ENCODE measurements at regions of chrX and their contacts with region 1.

Region 1: DNA sequence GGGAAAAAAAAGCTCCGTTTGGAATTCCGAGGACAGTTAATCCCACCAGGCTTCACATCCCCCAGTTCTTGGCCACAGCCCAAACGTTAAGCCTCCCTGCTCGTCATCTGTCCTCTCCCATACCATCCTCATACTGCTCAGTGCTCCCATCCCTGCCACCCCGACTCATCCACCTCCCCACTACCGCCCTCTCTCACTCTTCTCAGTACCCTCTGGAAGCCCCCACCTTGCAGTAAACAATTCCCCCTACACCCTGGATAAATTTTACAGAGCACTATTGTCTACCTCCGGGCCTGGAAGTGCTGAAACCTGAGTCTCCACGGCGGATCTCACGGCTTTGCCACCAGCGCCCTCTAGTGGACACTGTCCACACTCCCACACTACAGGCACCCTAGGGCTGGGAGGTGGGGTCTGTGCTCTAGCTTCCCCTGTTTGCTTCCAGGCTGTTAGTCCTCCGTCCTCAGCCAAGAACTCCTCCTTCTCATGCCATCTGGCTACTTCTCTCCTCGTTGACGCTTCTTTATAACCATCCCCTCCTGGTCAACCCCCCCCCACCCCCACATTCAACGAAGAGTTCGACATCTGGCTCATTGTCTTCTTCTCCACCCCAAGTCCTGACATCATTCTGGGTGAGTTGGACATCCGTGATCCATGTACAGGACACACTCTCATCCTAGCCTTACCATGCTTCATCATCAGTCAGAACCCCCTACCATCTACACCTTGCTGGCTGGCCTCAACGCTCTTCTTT is 54.5 kb downstream of the RTL9 start:
- DNase-seq: peak; percentile 74
- H3K4me3 Mint-ChIP-seq: no peak overlapping the region
- H3K27ac Mint-ChIP-seq: peak overlapping the region; percentile 68
- H3K4me1 Mint-ChIP-seq: peaks cover 16% of the 10 kb centered on the region
- H3K27me3 Mint-ChIP-seq: peaks cover 64% of the 10 kb centered on the region
- CTCF ChIP-seq: peak; percentile 86

Region 2: GRCh38 chrX:109911046-109911445 is 502.1 kb before region 1 on chrX:
- CTCF ChIA-PET with region 1: interaction called, 7 read pairs
- POLR2A ChIA-PET with region 1: no interaction called
- intact Hi-C with region 1: loop called (anchors 2 kb)
- DNase-seq: peak; percentile 20
- H3K4me3 Mint-ChIP-seq: no peak overlapping the region
- H3K27ac Mint-ChIP-seq: no peak overlapping the region
- H3K4me1 Mint-ChIP-seq: no peaks in the 10 kb centered on the region
- H3K27me3 Mint-ChIP-seq: peaks cover 50% of the 10 kb centered on the region
- CTCF ChIP-seq: peak; percentile 45

Region 3: DNA sequence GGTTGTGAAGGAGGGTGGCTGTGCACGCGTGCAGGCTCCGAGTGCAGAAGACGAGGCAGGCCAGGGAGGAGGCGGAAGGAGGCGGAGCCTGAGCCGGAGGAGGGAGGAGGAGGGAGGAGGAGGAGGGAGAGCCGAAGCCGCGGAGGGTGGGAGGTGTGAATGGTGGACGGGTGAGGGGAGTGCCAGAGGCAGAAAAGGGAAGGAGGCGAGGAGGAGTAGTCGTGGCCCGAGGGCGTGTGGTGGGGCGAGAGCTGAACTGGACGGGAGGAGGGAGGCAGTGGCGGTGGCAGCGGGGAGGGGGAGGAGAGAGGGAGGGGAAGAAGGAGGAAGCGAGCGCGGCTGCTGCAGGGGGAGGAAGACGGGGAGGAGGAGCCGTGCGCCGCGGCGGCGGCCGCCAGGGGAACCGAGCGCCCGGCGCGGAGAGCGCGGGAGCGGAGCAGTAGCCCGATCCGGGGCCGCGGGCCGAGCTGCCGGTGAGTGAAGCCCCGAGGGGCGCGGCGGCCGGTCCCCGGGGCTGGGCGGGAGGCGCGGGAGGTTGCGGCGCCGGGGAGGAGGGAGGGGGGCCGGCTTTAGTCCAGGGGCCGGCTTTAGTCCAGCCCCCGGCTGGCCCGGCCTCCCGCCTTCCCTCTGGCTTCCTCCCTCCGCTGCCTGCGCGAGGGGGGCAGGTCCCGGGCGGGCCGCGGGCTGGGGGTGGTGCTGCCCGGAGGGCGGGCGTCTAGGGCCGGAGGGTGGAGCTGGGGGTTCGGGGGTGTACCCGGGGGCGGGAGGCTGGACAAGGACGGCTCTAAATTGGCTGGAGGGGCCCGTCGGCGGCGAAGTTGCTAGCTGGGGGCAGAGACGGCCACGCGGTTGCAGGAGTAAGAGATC is 410.6 kb before region 1 on chrX and contains the start of gene TMEM164:
- CTCF ChIA-PET with region 1: interaction called, 3 read pairs
- POLR2A ChIA-PET with region 1: no interaction called
- intact Hi-C with region 1: loop called (anchors 10 kb)
- DNase-seq: peak; percentile 70
- H3K4me3 Mint-ChIP-seq: peak within 1 kb of the TSS; percentile 84
- H3K27ac Mint-ChIP-seq: peak within 1 kb of the TSS; percentile 80
- H3K4me1 Mint-ChIP-seq: peaks cover 27% of the 10 kb centered on the region
- H3K27me3 Mint-ChIP-seq: peaks cover 75% of the 10 kb centered on the region
- CTCF ChIP-seq: no peak
- total RNA-seq, gene TMEM164: 39.2 and 39.4 TPM in 2 replicates

Region 4: DNA sequence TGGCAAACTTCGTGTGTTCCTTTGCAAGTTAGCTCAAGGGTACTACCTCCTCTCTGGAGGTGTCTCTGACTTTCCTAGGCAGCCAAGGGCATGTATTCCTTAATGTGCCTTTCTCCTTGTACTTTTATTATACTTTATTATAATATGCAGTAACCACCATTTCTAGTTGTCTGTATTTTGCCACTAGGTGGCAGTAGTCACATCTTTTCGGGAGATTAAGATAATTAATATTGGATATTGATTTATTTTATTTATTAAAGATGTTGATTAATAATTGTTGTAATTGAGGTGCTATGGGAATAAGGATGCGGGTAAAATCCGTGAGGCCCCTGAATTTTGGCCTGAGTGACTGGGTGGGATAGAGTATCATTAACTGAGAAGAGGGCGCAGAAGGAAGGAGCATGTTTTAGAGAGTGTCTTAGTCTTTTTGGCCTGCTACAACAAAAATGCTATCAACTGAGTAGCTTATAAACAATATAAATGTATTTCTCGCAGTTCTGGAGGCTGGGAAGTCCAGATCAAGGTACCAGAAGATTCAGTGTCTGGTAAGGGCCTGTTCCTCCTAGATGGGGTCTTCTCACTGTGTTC is 256.9 kb before region 1 on chrX:
- CTCF ChIA-PET with region 1: interaction called, 432 read pairs
- POLR2A ChIA-PET with region 1: interaction called, 4 read pairs
- intact Hi-C with region 1: loop called (anchors 1 kb)
- DNase-seq: peak; percentile 29
- H3K4me3 Mint-ChIP-seq: no peak overlapping the region
- H3K27ac Mint-ChIP-seq: no peak overlapping the region
- H3K4me1 Mint-ChIP-seq: peaks cover 12% of the 10 kb centered on the region
- H3K27me3 Mint-ChIP-seq: peaks cover 43% of the 10 kb centered on the region
- CTCF ChIP-seq: peak; percentile 34

Region 5: DNA sequence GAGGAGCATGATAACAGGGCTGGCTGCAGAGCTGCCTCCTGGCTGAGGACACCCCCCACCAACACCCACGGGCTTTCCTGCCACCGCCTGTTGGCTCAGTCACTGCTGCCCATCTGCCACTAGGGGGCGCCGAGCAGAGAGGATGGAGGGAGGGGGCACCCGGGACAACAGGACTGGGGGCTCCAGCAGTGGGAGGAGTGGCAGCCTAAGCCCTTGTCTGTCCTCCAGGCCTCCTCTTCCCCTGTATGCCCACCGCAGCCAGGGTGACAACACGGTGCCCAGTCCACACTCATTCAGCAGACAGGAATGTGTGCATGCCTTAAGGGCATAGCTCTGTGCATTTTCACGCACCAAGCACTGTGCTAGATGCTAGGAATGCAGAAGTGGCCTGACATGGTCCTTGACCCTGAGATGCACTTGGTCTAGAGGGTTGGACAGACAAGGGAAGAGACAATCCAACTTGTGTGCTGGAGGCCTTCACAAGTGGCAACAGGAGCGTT is 245.1 kb before region 1 on chrX:
- CTCF ChIA-PET with region 1: interaction called, 432 read pairs
- POLR2A ChIA-PET with region 1: interaction called, 3 read pairs
- intact Hi-C with region 1: no loop called
- DNase-seq: peak; percentile 49
- H3K4me3 Mint-ChIP-seq: no peak overlapping the region
- H3K27ac Mint-ChIP-seq: no peak overlapping the region
- H3K4me1 Mint-ChIP-seq: peaks cover 20% of the 10 kb centered on the region
- H3K27me3 Mint-ChIP-seq: peaks cover 18% of the 10 kb centered on the region
- CTCF ChIP-seq: peak; percentile 54

Region 6: DNA sequence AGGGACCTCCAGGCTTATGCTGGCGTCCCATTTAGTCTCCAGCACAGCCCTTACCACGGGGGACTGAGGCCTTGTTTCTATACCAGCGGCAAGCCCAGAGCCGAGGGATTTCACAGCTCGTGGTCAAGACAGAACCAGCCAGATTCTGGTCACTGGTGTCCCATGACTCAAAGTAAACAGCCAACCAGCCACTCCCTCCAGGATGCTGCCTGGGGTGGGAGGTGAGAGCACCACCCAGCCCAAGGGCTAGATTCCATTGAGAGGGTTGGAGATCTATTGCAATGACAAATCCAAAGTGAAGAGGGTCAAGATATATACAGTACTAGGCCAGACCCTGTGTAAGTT is 239.3 kb before region 1 on chrX:
- CTCF ChIA-PET with region 1: interaction called, 432 read pairs
- POLR2A ChIA-PET with region 1: interaction called, 3 read pairs
- intact Hi-C with region 1: no loop called
- DNase-seq: peak; percentile 66
- H3K4me3 Mint-ChIP-seq: peak overlapping the region; percentile 6
- H3K27ac Mint-ChIP-seq: peak overlapping the region; percentile 62
- H3K4me1 Mint-ChIP-seq: peaks cover 28% of the 10 kb centered on the region
- H3K27me3 Mint-ChIP-seq: peaks cover 39% of the 10 kb centered on the region
- CTCF ChIP-seq: no peak